CD8-positive, alpha-beta T cell (primary cell): ENCODE measurements at regions of chr20 and their contacts with region 1.

Region 1: DNA sequence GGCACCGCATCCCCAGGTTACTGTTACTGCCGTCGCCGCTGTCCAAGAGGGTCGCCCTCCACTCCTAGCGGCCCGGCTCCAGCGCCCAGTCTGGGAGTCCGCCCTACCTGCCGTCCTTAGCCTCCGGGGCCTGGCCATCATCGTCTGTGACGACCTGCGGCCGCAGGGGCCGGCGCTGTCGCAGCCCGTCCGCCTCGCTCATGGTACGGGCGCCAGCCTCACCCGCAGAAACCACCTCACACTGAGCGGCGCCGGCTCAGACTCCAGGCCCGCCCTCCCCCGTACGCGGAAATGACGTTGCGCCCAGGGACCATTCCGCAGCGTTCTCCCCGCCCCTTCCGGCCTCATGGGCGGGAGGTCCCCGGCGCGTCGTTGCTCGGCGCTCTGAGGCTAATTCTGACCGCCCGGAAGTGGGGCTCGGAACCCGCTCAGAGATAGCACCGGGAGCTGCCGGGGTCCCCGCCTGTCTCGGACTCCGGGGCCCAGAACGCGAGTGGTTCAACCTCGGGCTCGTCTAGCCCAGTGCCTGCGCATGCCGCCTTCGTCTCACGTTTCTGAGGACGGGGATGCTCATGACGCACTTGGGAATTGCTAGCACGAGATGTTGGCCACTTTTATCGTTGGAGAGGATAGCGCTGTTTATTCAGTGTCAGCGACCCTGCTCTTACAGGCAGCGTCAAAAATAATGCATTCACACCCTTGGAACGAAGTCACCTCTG is at the start of gene APMAP:
- DNase-seq: peak; percentile 92 to 99 (median 97)
- ATAC-seq: peak; percentile 89
- H3K4me3 ChIP-seq: peak within 1 kb of the TSS; percentile 91 to 99
- H3K4me3 Mint-ChIP-seq: peak within 1 kb of the TSS; percentile 95
- H3K27ac ChIP-seq: peak within 1 kb of the TSS; percentile 94 to 96
- H3K27ac Mint-ChIP-seq: peak within 1 kb of the TSS; percentile 97
- H3K4me1 ChIP-seq: peaks cover 45% of the 10 kb centered on the region
- H3K4me1 Mint-ChIP-seq: peaks cover 65% of the 10 kb centered on the region
- H3K27me3 ChIP-seq: no peaks in the 10 kb centered on the region
- H3K27me3 Mint-ChIP-seq: no peaks in the 10 kb centered on the region
- CTCF ChIP-seq: no peak
- total RNA-seq, gene APMAP: 31.0 to 31.8 TPM

Region 2: GRCh38 chr20:23361598-23362384 is 1630.9 kb before region 1 on chr20 and contains the start of gene GZF1:
- CTCF ChIA-PET with region 1: no interaction called
- POLR2A ChIA-PET with region 1: no interaction called
- intact Hi-C with region 1: loop called in 1 of 2 experiments (anchors 2 kb)
- DNase-seq: peak; percentile 96 to 99 (median 98)
- ATAC-seq: peak; percentile 74
- H3K4me3 ChIP-seq: peak within 1 kb of the TSS; percentile 86 to 95
- H3K4me3 Mint-ChIP-seq: peak within 1 kb of the TSS; percentile 93
- H3K27ac ChIP-seq: peak within 1 kb of the TSS; percentile 92 to 97
- H3K27ac Mint-ChIP-seq: peak within 1 kb of the TSS; percentile 95
- H3K4me1 ChIP-seq: peaks cover 41% of the 10 kb centered on the region
- H3K4me1 Mint-ChIP-seq: peaks cover 62% of the 10 kb centered on the region
- H3K27me3 ChIP-seq: no peaks in the 10 kb centered on the region
- H3K27me3 Mint-ChIP-seq: no peaks in the 10 kb centered on the region
- CTCF ChIP-seq: peak; percentile 43
- total RNA-seq, gene GZF1: 44.9 to 49.5 TPM

Region 3: GRCh38 chr20:24253321-24253720 is 739.3 kb before region 1 on chr20:
- CTCF ChIA-PET with region 1: no interaction called
- POLR2A ChIA-PET with region 1: no interaction called
- intact Hi-C with region 1: no loop called
- DNase-seq: no peak
- ATAC-seq: no peak
- H3K4me3 ChIP-seq: no peak overlapping the region
- H3K4me3 Mint-ChIP-seq: no peak overlapping the region
- H3K27ac ChIP-seq: no peak overlapping the region
- H3K27ac Mint-ChIP-seq: no peak overlapping the region
- H3K4me1 ChIP-seq: no peaks in the 10 kb centered on the region
- H3K4me1 Mint-ChIP-seq: no peaks in the 10 kb centered on the region
- H3K27me3 ChIP-seq: no peaks in the 10 kb centered on the region
- H3K27me3 Mint-ChIP-seq: no peaks in the 10 kb centered on the region
- CTCF ChIP-seq: no peak

Region 4: GRCh38 chr20:24934101-24934661 is 58.5 kb before region 1 on chr20:
- CTCF ChIA-PET with region 1: interaction called, 6 read pairs
- POLR2A ChIA-PET with region 1: no interaction called
- intact Hi-C with region 1: loop called in 1 of 2 experiments (anchors 2 kb)
- DNase-seq: peak in 1 of 9 experiments; percentile 45
- ATAC-seq: no peak
- H3K4me3 ChIP-seq: no peak overlapping the region
- H3K4me3 Mint-ChIP-seq: no peak overlapping the region
- H3K27ac ChIP-seq: no peak overlapping the region
- H3K27ac Mint-ChIP-seq: no peak overlapping the region
- H3K4me1 ChIP-seq: peaks cover 17% of the 10 kb centered on the region
- H3K4me1 Mint-ChIP-seq: peaks cover 31% of the 10 kb centered on the region
- H3K27me3 ChIP-seq: no peaks in the 10 kb centered on the region
- H3K27me3 Mint-ChIP-seq: no peaks in the 10 kb centered on the region
- CTCF ChIP-seq: no peak

Region 5: DNA sequence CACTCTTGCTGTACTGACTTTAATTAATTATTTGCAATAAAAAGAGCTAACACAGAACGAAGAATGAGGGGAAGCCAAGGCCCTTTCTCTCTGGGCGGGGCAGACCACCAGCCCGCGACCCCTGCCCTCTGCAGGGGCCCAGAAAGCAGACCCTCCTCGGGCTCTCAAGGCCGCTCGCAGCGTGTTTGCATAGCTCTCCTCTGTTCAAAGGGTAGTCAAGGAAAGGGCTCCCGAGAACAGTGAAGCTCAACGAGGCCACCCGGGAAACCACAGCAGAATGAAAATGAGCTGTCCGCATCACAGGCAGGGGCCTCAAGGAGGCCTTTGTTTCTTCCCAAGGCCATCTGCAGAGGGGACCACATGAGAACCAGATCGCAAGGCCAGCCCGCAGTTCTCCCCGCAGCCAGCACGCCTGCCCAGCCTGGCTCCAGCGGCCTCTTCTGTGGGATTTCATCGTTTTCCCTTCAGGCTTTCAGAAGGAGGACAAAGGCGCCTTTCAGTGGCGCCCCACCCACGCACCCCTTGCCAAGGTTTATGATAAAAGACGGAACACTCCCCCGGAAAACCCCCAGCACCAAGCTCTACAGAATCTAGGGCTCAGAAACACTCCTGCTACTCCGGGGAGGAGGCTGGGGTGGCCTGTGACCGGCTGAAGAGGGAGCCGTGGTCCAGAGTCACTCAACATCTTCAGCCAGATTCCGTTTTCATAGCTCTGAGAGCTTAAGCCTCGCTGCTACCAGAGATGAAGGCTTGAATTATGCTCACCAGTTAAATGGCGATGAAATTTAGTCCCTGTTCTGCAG is 40.0 kb after region 1 on chr20:
- CTCF ChIA-PET with region 1: interaction called, 13 read pairs
- POLR2A ChIA-PET with region 1: interaction called, 3 read pairs
- intact Hi-C with region 1: no loop called
- DNase-seq: no peak
- ATAC-seq: no peak
- H3K4me3 ChIP-seq: no peak overlapping the region
- H3K4me3 Mint-ChIP-seq: no peak overlapping the region
- H3K27ac ChIP-seq: no peak overlapping the region
- H3K27ac Mint-ChIP-seq: no peak overlapping the region
- H3K4me1 ChIP-seq: peaks cover 22% of the 10 kb centered on the region
- H3K4me1 Mint-ChIP-seq: peaks cover 48% of the 10 kb centered on the region
- H3K27me3 ChIP-seq: no peaks in the 10 kb centered on the region
- H3K27me3 Mint-ChIP-seq: no peaks in the 10 kb centered on the region
- CTCF ChIP-seq: no peak

Region 6: DNA sequence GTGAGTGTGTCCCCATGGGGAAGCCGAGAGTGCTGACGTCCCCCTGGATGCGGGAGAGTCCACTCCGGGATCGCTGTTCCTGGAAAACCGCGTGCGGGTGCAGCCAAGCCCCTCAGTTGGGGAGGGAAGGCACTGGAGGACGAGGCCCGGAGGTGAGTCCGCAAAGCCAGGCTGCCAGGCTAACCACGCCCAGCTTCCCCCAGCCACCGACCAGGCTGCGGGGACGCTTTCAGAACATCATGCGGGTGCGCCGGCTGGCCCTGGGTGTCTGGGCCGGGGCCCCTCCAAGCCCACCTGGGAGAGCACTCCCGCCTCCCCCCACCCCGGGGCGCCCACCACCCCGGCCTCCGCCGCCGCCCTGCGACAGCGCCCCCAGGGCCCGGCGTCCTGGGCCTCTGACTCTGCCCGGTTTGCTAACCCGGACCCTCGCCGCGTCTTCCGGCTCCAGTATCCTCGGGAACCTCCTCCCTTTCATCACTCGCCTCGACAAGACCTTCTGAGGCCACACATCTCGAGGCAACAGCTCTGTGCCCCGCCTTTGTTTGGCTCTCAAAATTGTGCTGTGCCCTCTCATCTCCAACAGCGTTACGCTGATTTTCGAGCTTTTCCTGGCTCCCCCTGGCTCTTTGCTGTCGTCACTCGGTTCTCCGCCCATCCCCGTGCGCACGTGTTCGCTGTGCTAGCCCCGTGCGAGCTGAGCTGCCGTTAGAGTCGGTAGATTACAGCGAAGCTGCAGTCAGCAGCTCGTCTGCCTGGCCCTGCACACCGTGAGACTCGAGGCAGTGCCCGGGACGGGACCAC is 155.7 kb after region 1 on chr20:
- CTCF ChIA-PET with region 1: no interaction called
- POLR2A ChIA-PET with region 1: interaction called, 3 read pairs
- intact Hi-C with region 1: loop called in 1 of 2 experiments (anchors 1 kb)
- DNase-seq: peak; percentile 22 to 83 (median 73)
- ATAC-seq: peak; percentile 97
- H3K4me3 ChIP-seq: peak overlapping the region; percentile 47 to 49
- H3K4me3 Mint-ChIP-seq: peak overlapping the region; percentile 89
- H3K27ac ChIP-seq: peak overlapping the region in 1 of 2 experiments; percentile 3
- H3K27ac Mint-ChIP-seq: peak overlapping the region; percentile 86
- H3K4me1 ChIP-seq: peaks cover 7% of the 10 kb centered on the region
- H3K4me1 Mint-ChIP-seq: peaks cover 8% of the 10 kb centered on the region
- H3K27me3 ChIP-seq: no peaks in the 10 kb centered on the region
- H3K27me3 Mint-ChIP-seq: peaks cover 4% of the 10 kb centered on the region
- CTCF ChIP-seq: no peak

Region 7: GRCh38 chr20:25247956-25248785 is 255.5 kb after region 1 on chr20 and contains the start of gene PYGB:
- CTCF ChIA-PET with region 1: interaction called, 4 read pairs
- POLR2A ChIA-PET with region 1: interaction called, 6 read pairs
- intact Hi-C with region 1: loop called (anchors 2 to 5 kb)
- DNase-seq: peak; percentile 65 to 87 (median 70)
- ATAC-seq: peak; percentile 88
- H3K4me3 ChIP-seq: peak within 1 kb of the TSS; percentile 97 to 99
- H3K4me3 Mint-ChIP-seq: peak within 1 kb of the TSS; percentile 93
- H3K27ac ChIP-seq: peak within 1 kb of the TSS; percentile 53 to 80
- H3K27ac Mint-ChIP-seq: peak within 1 kb of the TSS; percentile 91
- H3K4me1 ChIP-seq: peaks cover 29% of the 10 kb centered on the region
- H3K4me1 Mint-ChIP-seq: peaks cover 54% of the 10 kb centered on the region
- H3K27me3 ChIP-seq: no peaks in the 10 kb centered on the region
- H3K27me3 Mint-ChIP-seq: no peaks in the 10 kb centered on the region
- CTCF ChIP-seq: no peak
- total RNA-seq, gene PYGB: 35.2 to 39.2 TPM

Region 8: DNA sequence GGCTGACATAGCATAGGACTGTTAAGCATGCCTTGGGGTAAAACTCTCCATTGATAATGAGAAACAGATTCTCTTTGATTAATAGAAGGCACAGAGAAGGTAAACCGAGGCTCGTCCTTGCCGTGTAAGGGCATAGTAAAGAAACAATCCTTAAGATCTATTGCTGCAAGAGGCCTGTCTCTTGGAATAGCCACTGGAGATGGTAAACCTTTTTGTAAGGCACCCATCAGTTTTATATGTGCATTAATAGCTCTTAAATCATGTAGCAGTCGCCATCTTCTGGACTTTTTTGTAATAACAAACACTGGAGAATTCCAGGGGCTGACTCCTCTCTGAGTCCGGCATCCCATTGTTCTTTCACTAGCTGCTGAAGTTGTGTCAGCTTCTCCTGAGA is 406.4 kb after region 1 on chr20:
- CTCF ChIA-PET with region 1: interaction called, 17 read pairs
- POLR2A ChIA-PET with region 1: no interaction called
- intact Hi-C with region 1: loop called (anchors 1 to 2 kb)
- DNase-seq: peak in 4 of 9 experiments; percentile 5 to 70 (median 39)
- ATAC-seq: peak; percentile 54
- H3K4me3 ChIP-seq: no peak overlapping the region
- H3K4me3 Mint-ChIP-seq: no peak overlapping the region
- H3K27ac ChIP-seq: no peak overlapping the region
- H3K27ac Mint-ChIP-seq: no peak overlapping the region
- H3K4me1 ChIP-seq: no peaks in the 10 kb centered on the region
- H3K4me1 Mint-ChIP-seq: no peaks in the 10 kb centered on the region
- H3K27me3 ChIP-seq: no peaks in the 10 kb centered on the region
- H3K27me3 Mint-ChIP-seq: no peaks in the 10 kb centered on the region
- CTCF ChIP-seq: peak; percentile 47